HCT116 (cell line): ENCODE measurements at regions of chr17 and their contacts with region 1.

Region 1: GRCh38 chr17:64129764-64130558 is at the start of gene ERN1:
- DNase-seq: peak; percentile 86
- ATAC-seq: peak; percentile 92
- H3K4me3 ChIP-seq: peak within 1 kb of the TSS; percentile 56 to 77
- H3K27ac ChIP-seq: peak within 1 kb of the TSS; percentile 74
- H3K4me1 ChIP-seq: peaks cover 11 to 20% of the 10 kb centered on the region in 2 experiments
- H3K27me3 ChIP-seq: no peaks in the 10 kb centered on the region
- CTCF ChIP-seq: no peak
- POLR2A ChIP-seq: peak; percentile 92
- RAD21 ChIP-seq: peak; percentile 11; the same call in 1 of the 2 replicates
- total RNA-seq, gene ERN1: 28.2 TPM

Region 2: DNA sequence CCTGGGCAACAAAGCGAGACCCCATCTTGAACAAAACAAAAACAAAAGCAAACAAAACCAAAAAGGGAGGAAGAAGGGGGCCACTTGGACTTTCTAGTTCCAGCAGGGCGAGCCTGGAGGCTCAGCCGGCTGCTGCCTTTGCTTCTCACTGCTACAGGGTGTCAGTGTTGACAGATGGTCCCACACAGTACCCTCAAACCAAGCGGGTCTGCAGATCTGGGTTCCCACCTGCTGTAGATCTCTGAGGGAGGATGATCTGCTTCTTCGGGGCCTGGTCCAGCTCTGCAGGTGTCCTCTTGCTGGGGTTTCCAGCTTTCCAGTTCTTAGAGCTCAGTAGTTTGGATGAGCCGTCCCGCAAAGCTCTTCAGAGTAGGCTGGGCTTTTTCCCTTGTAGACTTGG is 225.6 kb before region 1 on chr17:
- CTCF ChIA-PET with region 1: interaction called, 15 read pairs
- POLR2A ChIA-PET with region 1: interaction called, 3 read pairs
- RAD21 ChIA-PET with region 1: interaction called in 1 of 2 experiments, 5 read pairs
- intact Hi-C with region 1: no loop called
- DNase-seq: no peak
- ATAC-seq: no peak
- H3K4me3 ChIP-seq: no peak overlapping the region
- H3K27ac ChIP-seq: no peak overlapping the region
- H3K4me1 ChIP-seq: peaks cover 0 to 1% of the 10 kb centered on the region in 2 experiments; a peak in 1 of 4 replicates
- H3K27me3 ChIP-seq: 0 out of 2 replicates have a peak, but pooled peaks cover 6% of the 10 kb centered on the region
- CTCF ChIP-seq: no peak
- POLR2A ChIP-seq: no peak
- RAD21 ChIP-seq: no peak

Region 3: GRCh38 chr17:63919311-63919723 is 210.6 kb before region 1 on chr17:
- CTCF ChIA-PET with region 1: interaction called, 90 read pairs
- POLR2A ChIA-PET with region 1: interaction called, 4 read pairs
- RAD21 ChIA-PET with region 1: interaction called, 8 to 12 read pairs
- intact Hi-C with region 1: loop called (anchors 1 kb)
- DNase-seq: peak; percentile 59
- ATAC-seq: peak; percentile 98
- H3K4me3 ChIP-seq: no peak overlapping the region
- H3K27ac ChIP-seq: no peak overlapping the region
- H3K4me1 ChIP-seq: no peaks in the 10 kb centered on the region
- H3K27me3 ChIP-seq: no peaks in the 10 kb centered on the region
- CTCF ChIP-seq: peak; percentile 96 to 98 (median 98)
- POLR2A ChIP-seq: no peak
- RAD21 ChIP-seq: peak; percentile 97

Region 4: DNA sequence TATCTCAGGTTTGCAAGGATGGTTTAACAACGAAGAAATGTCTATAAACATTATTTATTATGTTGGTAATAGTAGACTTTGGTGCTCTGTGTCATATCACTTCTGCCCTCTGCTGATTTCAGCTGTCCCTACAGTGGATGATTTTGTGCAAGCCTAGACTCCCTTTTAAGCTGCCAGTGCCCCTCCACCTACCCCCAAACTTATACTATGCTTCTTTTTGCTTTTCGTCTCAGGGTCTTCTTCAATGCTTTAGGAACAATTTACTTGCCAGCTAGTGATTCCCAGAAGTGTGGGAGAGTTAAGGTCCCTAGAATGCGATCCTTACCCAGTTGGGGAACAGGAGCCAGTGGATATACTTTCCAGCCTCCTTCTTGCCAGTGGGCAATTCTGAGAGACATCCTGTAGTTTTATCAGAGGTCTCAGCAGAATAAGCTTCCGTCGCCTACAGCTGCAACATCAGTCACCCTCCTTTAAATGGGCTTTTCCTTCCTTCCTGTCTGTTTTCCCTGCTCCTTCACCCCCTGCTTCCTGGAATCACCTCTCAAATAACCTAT is 113.7 kb before region 1 on chr17:
- CTCF ChIA-PET with region 1: interaction called, 11 read pairs
- POLR2A ChIA-PET with region 1: interaction called, 3 read pairs
- RAD21 ChIA-PET with region 1: interaction called in 1 of 2 experiments, 3 read pairs
- intact Hi-C with region 1: no loop called
- DNase-seq: no peak
- ATAC-seq: peak; percentile 80
- H3K4me3 ChIP-seq: no peak overlapping the region
- H3K27ac ChIP-seq: no peak overlapping the region
- H3K4me1 ChIP-seq: no peaks in the 10 kb centered on the region
- H3K27me3 ChIP-seq: no peaks in the 10 kb centered on the region
- CTCF ChIP-seq: peak; percentile 16 to 39 (median 34); a peak in 4 of 6 replicates
- POLR2A ChIP-seq: no peak
- RAD21 ChIP-seq: peak; percentile 56

Region 5: GRCh38 chr17:64056269-64057005 is 73.5 kb before region 1 on chr17:
- CTCF ChIA-PET with region 1: interaction called, 158 read pairs
- POLR2A ChIA-PET with region 1: interaction called, 3 read pairs
- RAD21 ChIA-PET with region 1: interaction called, 4 to 7 read pairs
- intact Hi-C with region 1: no loop called
- DNase-seq: no peak
- ATAC-seq: 0 out of 2 replicates have a peak, but pooled peaks have one; percentile 48
- H3K4me3 ChIP-seq: no peak overlapping the region
- H3K27ac ChIP-seq: no peak overlapping the region
- H3K4me1 ChIP-seq: peaks cover 0 to 7% of the 10 kb centered on the region in 2 experiments; a peak in 1 of 4 replicates
- H3K27me3 ChIP-seq: no peaks in the 10 kb centered on the region
- CTCF ChIP-seq: 0 out of 6 replicates have a peak, but pooled peaks of 1 of the 3 experiments have one; percentile 1
- POLR2A ChIP-seq: no peak
- RAD21 ChIP-seq: 0 out of 2 replicates have a peak, but pooled peaks have one; percentile 12

Region 6: DNA sequence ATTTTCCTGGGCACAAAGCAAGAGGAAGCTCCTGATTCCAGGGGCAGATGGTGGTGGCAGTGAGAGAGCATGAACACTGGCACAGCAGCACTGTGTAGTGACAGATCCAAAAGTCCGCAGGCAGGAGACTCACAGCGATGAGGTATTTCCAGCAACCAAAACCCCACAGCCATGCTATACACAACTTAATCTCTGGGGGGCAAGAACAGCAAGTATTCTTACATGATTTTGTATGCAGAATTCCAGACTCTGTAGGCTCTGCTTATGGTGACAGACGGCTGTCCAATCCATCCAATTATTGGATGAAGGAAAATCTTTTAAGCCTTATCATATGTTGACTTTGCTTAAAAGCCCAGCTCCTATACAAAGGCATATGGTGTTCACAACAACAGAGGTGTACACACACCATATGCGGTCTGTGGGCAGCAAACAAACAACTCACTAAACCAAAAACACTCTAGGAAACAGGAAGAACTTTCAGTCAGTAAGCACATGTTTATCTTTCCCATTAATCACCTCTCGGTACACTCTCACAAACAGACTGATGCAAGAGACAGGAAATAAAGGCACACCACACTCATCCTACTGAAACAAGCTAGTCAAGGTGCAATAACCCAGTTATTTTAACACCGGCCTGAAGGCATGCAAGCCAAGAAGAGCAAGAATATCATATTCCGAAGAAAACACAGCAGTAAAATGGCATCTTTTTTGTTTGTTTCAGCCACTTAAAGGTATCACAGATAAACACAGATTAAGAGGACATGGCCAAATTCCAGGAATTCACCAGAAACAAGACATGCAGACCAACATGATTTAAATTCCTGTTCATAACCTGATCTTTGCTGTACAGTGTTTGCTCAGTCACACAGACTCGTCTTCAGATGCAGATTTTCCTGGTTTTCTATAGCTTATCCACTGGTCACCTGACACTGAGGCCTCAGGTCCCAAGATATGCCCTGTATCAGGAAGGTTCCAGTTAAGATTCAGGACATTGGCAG is 47.9 kb before region 1 on chr17:
- CTCF ChIA-PET with region 1: interaction called, 10 read pairs
- POLR2A ChIA-PET with region 1: interaction called, 7 read pairs
- RAD21 ChIA-PET with region 1: interaction called in 1 of 2 experiments, 3 read pairs
- intact Hi-C with region 1: loop called (anchors 2 kb)
- DNase-seq: peak; percentile 82
- ATAC-seq: peak; percentile 59
- H3K4me3 ChIP-seq: no peak overlapping the region
- H3K27ac ChIP-seq: peak overlapping the region; percentile 6; the same call in 1 of the 2 replicates
- H3K4me1 ChIP-seq: peaks cover 31 to 50% of the 10 kb centered on the region in 2 experiments
- H3K27me3 ChIP-seq: no peaks in the 10 kb centered on the region
- CTCF ChIP-seq: no peak
- POLR2A ChIP-seq: no peak
- RAD21 ChIP-seq: peak; percentile 23; the same call in 1 of the 2 replicates

Region 7: DNA sequence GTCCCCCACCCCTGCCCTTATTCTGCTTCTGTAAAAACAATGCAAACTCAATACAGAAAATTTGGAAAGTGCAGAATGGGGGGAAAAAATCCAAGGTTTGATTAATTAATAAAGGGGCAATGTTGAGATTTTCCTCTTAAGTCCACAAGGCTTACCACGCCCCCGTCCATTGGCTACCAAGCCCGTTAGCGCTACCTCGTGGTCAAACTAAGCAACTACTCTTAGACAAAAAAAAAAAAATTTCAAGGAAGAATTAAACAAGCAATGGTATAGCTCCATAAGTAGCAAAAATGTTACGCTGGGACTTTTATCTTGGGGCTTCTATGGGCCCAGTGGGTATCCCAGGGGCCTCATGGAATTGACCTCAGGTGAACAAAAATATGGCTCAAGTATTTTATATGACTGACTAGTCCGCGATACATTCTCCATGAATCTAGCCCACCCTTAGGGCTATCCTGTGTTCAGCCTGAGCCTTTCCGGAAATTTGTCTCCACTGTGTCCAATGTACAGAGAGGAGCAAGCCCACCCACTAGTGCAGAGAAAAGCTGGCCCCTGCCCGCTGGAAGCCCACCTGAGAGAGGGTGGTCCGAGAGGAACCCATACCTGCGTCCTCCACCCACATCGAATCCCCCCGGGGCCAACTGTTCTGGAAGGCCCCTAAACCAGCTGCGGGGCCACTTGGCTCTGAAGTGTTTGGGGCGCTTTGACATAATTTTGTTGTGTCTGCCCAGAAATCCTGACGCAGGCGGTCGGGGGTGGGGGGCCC is 152.2 kb after region 1 on chr17:
- CTCF ChIA-PET with region 1: interaction called, 30 read pairs
- POLR2A ChIA-PET with region 1: no interaction called
- RAD21 ChIA-PET with region 1: interaction called, 3 to 4 read pairs
- intact Hi-C with region 1: loop called (anchors 5 kb)
- DNase-seq: peak; percentile 86
- ATAC-seq: peak; percentile 89
- H3K4me3 ChIP-seq: no peak overlapping the region
- H3K27ac ChIP-seq: no peak overlapping the region
- H3K4me1 ChIP-seq: peaks cover 0 to 10% of the 10 kb centered on the region in 2 experiments; a peak in 2 of 4 replicates
- H3K27me3 ChIP-seq: no peaks in the 10 kb centered on the region
- CTCF ChIP-seq: peak; percentile 87 to 94 (median 91)
- POLR2A ChIP-seq: no peak
- RAD21 ChIP-seq: peak; percentile 94

Region 8: DNA sequence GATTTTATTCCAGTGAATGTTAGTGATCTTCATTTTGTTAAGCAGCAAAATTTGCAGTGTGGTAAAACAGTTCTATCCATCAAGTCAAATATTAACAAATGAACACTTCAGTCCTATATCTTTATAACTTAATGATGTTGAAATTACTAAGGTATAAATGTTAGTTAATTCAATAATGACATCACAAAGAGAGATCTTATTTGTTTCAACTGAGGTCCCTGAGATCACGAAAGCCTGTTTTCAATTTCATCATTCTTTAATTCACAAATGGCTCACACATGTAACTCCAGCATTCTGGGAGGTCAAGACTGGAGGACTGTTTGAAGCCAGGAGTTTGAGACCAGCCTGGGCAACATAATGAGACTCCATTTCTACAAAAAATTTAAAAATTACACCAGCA is 518.3 kb after region 1 on chr17:
- CTCF ChIA-PET with region 1: no interaction called
- POLR2A ChIA-PET with region 1: no interaction called
- RAD21 ChIA-PET with region 1: no interaction called
- intact Hi-C with region 1: no loop called
- DNase-seq: no peak
- ATAC-seq: no peak
- H3K4me3 ChIP-seq: no peak overlapping the region
- H3K27ac ChIP-seq: no peak overlapping the region; the same call in 1 of the 2 replicates
- H3K4me1 ChIP-seq: peaks cover 49 to 50% of the 10 kb centered on the region in 2 experiments
- H3K27me3 ChIP-seq: no peaks in the 10 kb centered on the region
- CTCF ChIP-seq: no peak
- POLR2A ChIP-seq: no peak
- RAD21 ChIP-seq: no peak